Transverse colon (tissue), 4 donors: ENCODE measurements at regions of chr17 and their contacts with region 1.

Region 1: DNA sequence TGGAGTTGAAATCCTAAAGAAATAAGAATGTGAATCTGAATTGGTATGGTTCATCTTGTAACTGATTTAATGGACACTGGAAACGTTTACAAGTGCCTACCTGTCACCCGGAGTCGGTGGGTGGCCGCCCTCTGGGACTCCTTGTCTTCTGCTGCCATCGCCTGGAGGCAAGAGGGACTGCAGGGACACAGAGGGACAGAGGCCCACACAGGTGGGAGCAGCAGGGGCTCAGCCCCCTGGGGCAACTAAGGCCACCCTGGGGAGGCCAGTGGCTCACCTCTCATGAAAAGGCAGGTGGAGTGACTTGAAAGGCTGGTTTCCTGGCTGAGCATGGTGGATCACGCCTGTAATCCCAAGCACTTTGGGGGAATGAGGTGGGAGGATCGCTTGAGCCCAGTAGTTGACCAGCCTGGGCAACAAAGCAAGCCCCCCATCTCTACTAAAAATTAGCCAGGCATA is 23.2 kb downstream of the TMEM92 start:
- DNase-seq: peak; percentile 83
- H3K4me3 ChIP-seq: no peak overlapping the region
- H3K27ac ChIP-seq: no peak overlapping the region
- H3K4me1 ChIP-seq: peaks cover 0 to 9% (median 0%) of the 10 kb centered on the region in 4 donors
- H3K27me3 ChIP-seq: no peaks in the 10 kb centered on the region
- CTCF ChIP-seq: peak; percentile 91 to 96 (median 95)
- EP300 ChIP-seq: no peak
- POLR2A ChIP-seq: no peak

Region 2: DNA sequence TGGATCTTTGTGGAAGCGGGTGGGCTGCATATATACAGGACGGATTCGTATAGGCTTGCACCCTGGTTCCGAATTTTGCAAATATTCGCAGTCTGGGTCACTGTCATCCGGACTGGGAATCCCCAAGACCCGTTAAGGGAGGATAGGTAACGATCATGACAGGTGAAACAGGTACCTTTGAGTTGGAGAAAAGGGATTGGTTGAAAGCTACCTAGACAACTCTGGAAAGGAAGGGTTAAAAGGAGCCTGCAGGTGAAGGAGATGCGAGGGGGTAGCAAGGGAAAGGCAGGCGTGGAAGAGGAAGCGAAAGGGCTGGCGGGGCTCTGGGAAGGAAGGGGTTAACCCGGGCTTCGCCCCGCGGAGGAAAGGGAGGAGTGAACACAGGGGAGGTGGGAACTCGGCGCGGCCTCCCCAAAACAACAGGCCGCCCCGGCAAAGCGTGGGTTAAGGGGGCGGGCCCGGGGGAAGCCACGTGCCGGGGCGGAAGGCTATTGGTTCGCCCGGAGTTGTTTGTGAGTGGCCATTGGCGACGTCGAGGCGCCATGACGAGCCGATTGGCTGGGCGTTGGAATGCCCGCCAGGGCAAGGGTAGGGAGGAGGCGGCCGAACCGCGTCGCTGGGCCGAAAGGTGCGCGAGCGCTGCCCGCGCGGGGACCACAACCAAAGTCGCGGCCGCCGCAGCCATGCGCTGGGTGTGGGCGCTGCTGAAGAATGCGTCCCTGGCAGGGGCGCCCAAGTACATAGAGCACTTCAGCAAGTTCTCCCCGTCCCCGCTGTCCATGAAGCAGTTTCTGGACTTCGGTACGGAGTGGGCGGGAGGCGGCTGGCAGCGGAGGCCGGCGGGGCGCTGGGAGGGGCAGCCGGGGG is 202.4 kb before region 1 on chr17 and contains the start of gene PDK2:
- in situ Hi-C with region 1: no loop called
- intact Hi-C with region 1: loop called (anchors 10 kb)
- DNase-seq: peak; percentile 97
- H3K4me3 ChIP-seq: peak within 1 kb of the TSS; percentile 78 to 95 (median 84)
- H3K27ac ChIP-seq: peak within 1 kb of the TSS; percentile 88 to 94 (median 92)
- H3K4me1 ChIP-seq: peaks cover 24 to 46% (median 33%) of the 10 kb centered on the region in 4 donors
- H3K27me3 ChIP-seq: no peaks in the 10 kb centered on the region
- CTCF ChIP-seq: no peak
- EP300 ChIP-seq: no peak
- POLR2A ChIP-seq: peak; percentile 90
- total RNA-seq, gene PDK2: 84.6 to 292 (median 136) TPM

Region 3: GRCh38 chr17:50169121-50169764 is 128.2 kb before region 1 on chr17:
- in situ Hi-C with region 1: no loop called
- intact Hi-C with region 1: loop called (anchors 1 kb)
- DNase-seq: peak; percentile 41
- H3K4me3 ChIP-seq: no peak overlapping the region
- H3K27ac ChIP-seq: no peak overlapping the region
- H3K4me1 ChIP-seq: peaks cover 0 to 15% (median 3%) of the 10 kb centered on the region in 4 donors
- H3K27me3 ChIP-seq: no peaks in the 10 kb centered on the region
- CTCF ChIP-seq: peak; percentile 66 to 96 (median 71)
- EP300 ChIP-seq: no peak
- POLR2A ChIP-seq: no peak

Region 4: GRCh38 chr17:50200457-50201275 is 96.8 kb before region 1 on chr17:
- in situ Hi-C with region 1: no loop called
- intact Hi-C with region 1: loop called (anchors 5 kb)
- DNase-seq: peak; percentile 91
- H3K4me3 ChIP-seq: peak overlapping the region; percentile 10 to 56 (median 42)
- H3K27ac ChIP-seq: peak overlapping the region; percentile 88 to 95 (median 89)
- H3K4me1 ChIP-seq: peaks cover 0 to 71% (median 36%) of the 10 kb centered on the region in 4 donors
- H3K27me3 ChIP-seq: peaks cover 56% of the 10 kb centered on the region
- CTCF ChIP-seq: peak; percentile 98 to 100 (median 100)
- EP300 ChIP-seq: no peak
- POLR2A ChIP-seq: no peak